B cell (primary cell): ENCODE measurements at regions of chr17 and their contacts with region 1.

Region 1: GRCh38 chr17:57747221-57748017 is 2.3 kb upstream of the CCDC182 start:
- DNase-seq: peak; percentile 75
- ATAC-seq: peak; percentile 73
- H3K4me3 ChIP-seq: no peak overlapping the region
- H3K4me3 Mint-ChIP-seq: no peak overlapping the region
- H3K27ac ChIP-seq: no peak overlapping the region
- H3K27ac Mint-ChIP-seq: no peak overlapping the region
- H3K4me1 ChIP-seq: peaks cover 12 to 14% of the 10 kb centered on the region in 2 donors
- H3K4me1 Mint-ChIP-seq: peaks cover 17% of the 10 kb centered on the region
- H3K27me3 ChIP-seq: peaks cover 0 to 4% (median 0%) of the 10 kb centered on the region in 4 experiments
- H3K27me3 Mint-ChIP-seq: peaks cover 14% of the 10 kb centered on the region
- CTCF ChIP-seq: peak; percentile 82

Region 2: DNA sequence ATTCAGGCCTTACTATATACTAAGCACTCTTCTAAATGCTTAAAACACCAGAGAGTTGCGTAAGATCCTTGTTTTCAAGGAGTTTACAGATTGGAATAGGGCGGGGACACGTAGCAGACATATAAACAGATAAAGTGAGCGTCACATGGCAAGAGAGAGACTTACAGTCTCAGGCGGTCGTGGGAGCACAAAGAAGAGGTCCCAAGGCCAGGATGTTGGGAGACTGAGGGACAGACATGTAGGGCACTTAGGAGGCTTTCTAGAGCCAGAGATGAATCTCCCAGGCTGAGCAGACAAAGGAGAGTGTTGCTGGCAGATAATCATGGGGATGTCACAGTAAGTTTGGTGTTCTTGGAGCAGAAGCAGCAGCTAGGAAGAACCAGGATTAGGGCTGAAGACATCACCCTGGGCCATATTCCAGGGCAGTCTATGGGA is 1713.2 kb before region 1 on chr17:
- CTCF ChIA-PET with region 1: no interaction called
- POLR2A ChIA-PET with region 1: no interaction called
- intact Hi-C with region 1: no loop called
- DNase-seq: no peak
- ATAC-seq: no peak
- H3K4me3 ChIP-seq: no peak overlapping the region
- H3K4me3 Mint-ChIP-seq: no peak overlapping the region
- H3K27ac ChIP-seq: no peak overlapping the region
- H3K27ac Mint-ChIP-seq: no peak overlapping the region
- H3K4me1 ChIP-seq: no peaks in the 10 kb centered on the region
- H3K4me1 Mint-ChIP-seq: no peaks in the 10 kb centered on the region
- H3K27me3 ChIP-seq: no peaks in the 10 kb centered on the region
- H3K27me3 Mint-ChIP-seq: peaks cover 10% of the 10 kb centered on the region
- CTCF ChIP-seq: no peak

Region 3: DNA sequence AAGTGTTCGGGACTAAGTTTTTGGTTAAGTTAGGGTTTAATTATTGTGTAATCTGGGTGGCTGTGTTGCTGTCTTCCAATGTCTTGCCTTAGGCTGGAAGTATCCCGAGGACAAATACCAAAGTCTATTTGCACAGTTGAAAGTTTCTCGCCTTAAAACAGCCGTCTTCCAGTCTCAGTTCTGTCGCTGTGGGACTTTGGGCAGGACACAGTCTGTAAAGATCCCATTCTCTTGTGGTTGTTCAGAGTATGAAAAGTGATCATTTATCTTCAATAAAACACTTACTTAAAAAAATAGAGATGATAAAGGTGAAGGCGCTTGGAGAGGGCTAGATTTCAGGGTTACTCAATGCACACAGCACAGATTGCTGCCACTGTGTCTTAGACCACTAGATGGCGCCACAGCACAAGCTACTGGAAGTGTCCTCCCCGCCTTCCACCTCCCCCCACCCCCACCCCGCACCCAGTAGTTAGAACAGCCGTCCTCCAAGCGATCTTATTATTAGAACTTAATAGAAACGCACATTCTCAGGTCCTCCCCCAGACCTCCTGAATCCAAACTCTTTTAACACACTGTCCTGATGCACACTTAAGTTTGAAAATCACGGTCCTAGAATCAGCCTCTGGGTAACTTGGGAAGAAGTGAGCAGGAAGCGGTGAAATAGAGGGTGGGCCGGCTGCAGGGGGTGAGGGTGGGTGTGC is 616.5 kb before region 1 on chr17:
- CTCF ChIA-PET with region 1: interaction called, 17 read pairs
- POLR2A ChIA-PET with region 1: no interaction called
- intact Hi-C with region 1: no loop called
- DNase-seq: peak; percentile 85
- ATAC-seq: peak; percentile 98
- H3K4me3 ChIP-seq: no peak overlapping the region
- H3K4me3 Mint-ChIP-seq: no peak overlapping the region
- H3K27ac ChIP-seq: no peak overlapping the region
- H3K27ac Mint-ChIP-seq: no peak overlapping the region
- H3K4me1 ChIP-seq: peaks cover 8 to 14% of the 10 kb centered on the region in 2 donors
- H3K4me1 Mint-ChIP-seq: peaks cover 15% of the 10 kb centered on the region
- H3K27me3 ChIP-seq: no peaks in the 10 kb centered on the region
- H3K27me3 Mint-ChIP-seq: peaks cover 22% of the 10 kb centered on the region
- CTCF ChIP-seq: peak; percentile 87

Region 4: DNA sequence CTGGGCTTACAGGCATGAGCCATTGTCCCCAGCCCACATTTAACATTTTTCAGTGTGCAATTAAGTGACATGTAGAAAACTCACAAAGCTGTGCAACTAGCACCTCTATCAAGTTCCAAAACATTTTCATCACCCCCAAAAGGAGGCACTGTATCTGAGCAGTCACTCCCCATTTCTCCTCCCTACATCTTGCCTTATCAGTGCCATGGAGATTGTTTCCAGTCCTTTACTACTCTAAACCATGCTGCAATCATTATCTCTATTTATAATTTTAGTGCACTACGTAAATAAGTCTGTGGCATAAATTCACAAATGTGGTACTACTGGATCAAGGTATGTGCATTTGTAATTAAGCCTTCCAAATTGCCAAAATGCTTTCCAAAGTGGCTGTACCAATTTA is 94.9 kb after region 1 on chr17:
- CTCF ChIA-PET with region 1: no interaction called
- POLR2A ChIA-PET with region 1: no interaction called
- intact Hi-C with region 1: no loop called
- DNase-seq: no peak
- ATAC-seq: no peak
- H3K4me3 ChIP-seq: no peak overlapping the region
- H3K4me3 Mint-ChIP-seq: no peak overlapping the region
- H3K27ac ChIP-seq: no peak overlapping the region
- H3K27ac Mint-ChIP-seq: no peak overlapping the region
- H3K4me1 ChIP-seq: no peaks in the 10 kb centered on the region
- H3K4me1 Mint-ChIP-seq: peaks cover 7% of the 10 kb centered on the region
- H3K27me3 ChIP-seq: no peaks in the 10 kb centered on the region
- H3K27me3 Mint-ChIP-seq: no peaks in the 10 kb centered on the region
- CTCF ChIP-seq: no peak

Region 5: GRCh38 chr17:58172369-58173071 is 425.1 kb after region 1 on chr17:
- CTCF ChIA-PET with region 1: no interaction called
- POLR2A ChIA-PET with region 1: no interaction called
- intact Hi-C with region 1: no loop called
- DNase-seq: peak; percentile 37
- ATAC-seq: no peak
- H3K4me3 ChIP-seq: no peak overlapping the region
- H3K4me3 Mint-ChIP-seq: no peak overlapping the region
- H3K27ac ChIP-seq: no peak overlapping the region
- H3K27ac Mint-ChIP-seq: no peak overlapping the region
- H3K4me1 ChIP-seq: peaks cover 0 to 3% of the 10 kb centered on the region in 2 donors
- H3K4me1 Mint-ChIP-seq: peaks cover 3% of the 10 kb centered on the region
- H3K27me3 ChIP-seq: peaks cover 0 to 17% (median 5%) of the 10 kb centered on the region in 4 experiments
- H3K27me3 Mint-ChIP-seq: peaks cover 41% of the 10 kb centered on the region
- CTCF ChIP-seq: peak; percentile 31